ENCODE measurements at regions of chr5 and their contacts with region 1.

Region 1: GRCh38 chr5:134411546-134412266 is at the start of gene CDKN2AIPNL:
- DNase-seq: peak; percentile 80
- ATAC-seq: peak; percentile 99
- H3K4me3 ChIP-seq: peak within 1 kb of the TSS; percentile 96
- H3K27ac ChIP-seq: peak within 1 kb of the TSS; percentile 16; the same call in 1 of the 2 replicates
- H3K4me1 ChIP-seq: peaks cover 24% of the 10 kb centered on the region; the same call in 1 of the 2 replicates
- H3K27me3 ChIP-seq: no peaks in the 10 kb centered on the region
- CTCF ChIP-seq: peak; percentile 68
- total RNA-seq, gene CDKN2AIPNL: 29.7 and 38.2 TPM in 2 replicates

Region 2: GRCh38 chr5:134394932-134395331 is 16.8 kb before region 1 on chr5:
- CTCF ChIA-PET with region 1: no interaction called
- POLR2A ChIA-PET with region 1: no interaction called
- intact Hi-C with region 1: loop called (anchors 2 kb)
- DNase-seq: no peak
- ATAC-seq: no peak
- H3K4me3 ChIP-seq: no peak overlapping the region
- H3K27ac ChIP-seq: no peak overlapping the region
- H3K4me1 ChIP-seq: peaks cover 35% of the 10 kb centered on the region
- H3K27me3 ChIP-seq: no peaks in the 10 kb centered on the region
- CTCF ChIP-seq: no peak